HCT116 (cell line): ENCODE measurements at regions of chr1 and their contacts with region 1.

Region 1: GRCh38 chr1:11661103-11661502 is 2.9 kb upstream of the FBXO6 start:
- DNase-seq: no peak
- ATAC-seq: no peak
- H3K4me3 ChIP-seq: no peak overlapping the region
- H3K27ac ChIP-seq: 0 out of 2 replicates have a peak overlapping the region, but pooled peaks have one; percentile 22
- H3K4me1 ChIP-seq: peaks cover 9 to 26% of the 10 kb centered on the region in 2 experiments
- H3K27me3 ChIP-seq: no peaks in the 10 kb centered on the region
- CTCF ChIP-seq: no peak
- POLR2A ChIP-seq: no peak
- RAD21 ChIP-seq: no peak

Region 2: DNA sequence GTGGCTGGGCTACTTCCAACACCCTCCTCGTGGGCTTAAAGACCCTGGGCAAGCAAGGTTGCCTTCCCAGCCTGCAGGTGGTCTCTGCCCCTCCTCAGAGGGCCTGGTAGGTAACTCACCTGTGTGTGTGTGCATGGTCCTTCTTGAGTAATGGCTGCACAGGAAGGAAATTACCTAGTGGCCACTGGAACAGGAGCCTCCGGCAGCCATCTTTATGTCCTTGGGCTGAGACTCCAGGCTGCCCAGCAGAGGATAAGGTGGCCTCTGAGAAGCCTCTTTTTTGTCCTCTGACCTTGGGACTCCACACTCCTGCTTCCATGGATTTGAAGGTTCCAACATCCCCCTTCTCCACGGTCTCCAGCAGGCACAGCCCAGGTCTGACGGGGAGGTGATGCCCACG is 50.4 kb after region 1 on chr1:
- CTCF ChIA-PET with region 1: interaction called, 12 read pairs
- POLR2A ChIA-PET with region 1: no interaction called
- RAD21 ChIA-PET with region 1: interaction called in 1 of 2 experiments, 4 read pairs
- intact Hi-C with region 1: no loop called
- DNase-seq: no peak
- ATAC-seq: 0 out of 2 replicates have a peak, but pooled peaks have one; percentile 5
- H3K4me3 ChIP-seq: no peak overlapping the region
- H3K27ac ChIP-seq: no peak overlapping the region
- H3K4me1 ChIP-seq: peaks cover 16 to 26% of the 10 kb centered on the region in 2 experiments
- H3K27me3 ChIP-seq: no peaks in the 10 kb centered on the region
- CTCF ChIP-seq: no peak
- POLR2A ChIP-seq: no peak
- RAD21 ChIP-seq: no peak